ENCODE measurements at regions of chr12 and their contacts with region 1.

Region 1: DNA sequence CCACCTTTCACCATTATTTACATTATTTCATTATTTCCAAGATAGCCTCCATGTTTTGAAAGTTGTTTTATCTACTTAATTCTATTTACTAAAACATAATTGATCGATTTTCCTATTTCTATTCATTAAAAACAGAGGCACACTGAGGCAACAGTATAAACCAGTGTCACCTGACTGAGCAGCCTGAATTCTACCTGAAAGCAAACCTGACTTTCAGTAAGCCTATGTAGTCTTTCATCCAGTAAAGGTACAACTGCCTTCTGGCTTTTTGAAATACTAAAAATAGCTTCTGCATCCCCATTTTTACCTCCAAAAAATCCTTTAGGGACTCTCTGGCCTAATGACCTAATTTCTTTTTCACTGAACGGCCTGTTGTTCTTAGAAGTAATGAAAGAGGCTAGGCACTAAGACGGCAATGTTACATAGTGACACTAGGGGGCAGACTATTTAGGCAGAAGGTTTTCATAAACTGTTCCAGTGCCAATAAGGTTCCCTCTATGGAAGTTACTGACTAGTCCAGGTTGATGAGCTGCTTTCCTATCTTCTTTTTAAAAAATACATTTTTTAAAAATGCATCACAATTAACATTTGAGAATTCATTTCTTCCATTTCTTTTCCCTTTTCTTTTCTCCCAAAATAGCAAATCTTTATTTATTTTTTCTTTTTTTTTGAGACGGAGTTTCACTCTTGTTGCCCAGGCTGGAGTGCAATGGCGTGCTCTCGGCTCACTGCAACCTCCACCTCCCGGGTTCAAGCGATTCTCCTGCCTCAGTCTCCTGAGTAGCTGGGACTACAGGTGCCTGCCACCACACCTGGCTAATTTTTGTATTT is 17.5 kb downstream of the ANAPC5 start:
- DNase-seq: peak in 3 of 9 experiments; percentile 14 to 74 (median 60)
- ATAC-seq: peak; percentile 93
- H3K4me3 ChIP-seq: no peak overlapping the region
- H3K4me3 Mint-ChIP-seq: no peak overlapping the region
- H3K27ac ChIP-seq: no peak overlapping the region
- H3K27ac Mint-ChIP-seq: no peak overlapping the region
- H3K4me1 ChIP-seq: no peaks in the 10 kb centered on the region
- H3K4me1 Mint-ChIP-seq: peaks cover 3% of the 10 kb centered on the region
- H3K27me3 ChIP-seq: no peaks in the 10 kb centered on the region
- H3K27me3 Mint-ChIP-seq: no peaks in the 10 kb centered on the region
- CTCF ChIP-seq: peak; percentile 92

Region 2: DNA sequence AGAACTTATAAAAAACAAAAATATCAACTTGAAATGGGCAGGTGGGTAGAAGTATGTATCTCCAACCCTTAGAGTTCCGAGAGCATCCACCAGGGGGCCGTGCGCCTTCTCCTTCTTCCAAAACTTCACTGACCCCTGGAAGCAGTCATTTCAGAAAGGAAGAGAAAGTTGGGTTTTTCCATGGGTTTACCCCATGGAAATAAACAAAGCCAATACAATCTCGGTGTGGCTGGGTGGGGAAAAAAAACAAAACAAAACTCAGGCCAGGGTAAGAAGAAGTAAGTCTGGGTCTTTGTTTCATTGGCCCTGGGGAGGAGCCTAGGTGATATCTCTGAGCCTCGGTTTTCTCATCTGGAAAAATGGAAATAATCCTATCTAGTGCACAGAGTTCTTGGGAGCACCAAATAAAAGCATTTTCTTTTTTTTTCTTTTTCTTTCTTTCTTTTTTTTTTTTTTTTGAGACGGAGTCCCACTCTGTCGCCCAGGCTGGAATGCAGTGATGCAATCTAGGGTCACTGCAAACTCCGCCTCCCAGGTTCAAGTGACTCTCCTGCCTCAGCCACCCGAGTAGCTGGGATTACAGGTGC is 390.0 kb before region 1 on chr12:
- CTCF ChIA-PET with region 1: no interaction called
- POLR2A ChIA-PET with region 1: no interaction called
- intact Hi-C with region 1: no loop called
- DNase-seq: peak; percentile 21 to 75 (median 65)
- ATAC-seq: peak; percentile 69
- H3K4me3 ChIP-seq: no peak overlapping the region
- H3K4me3 Mint-ChIP-seq: no peak overlapping the region
- H3K27ac ChIP-seq: no peak overlapping the region
- H3K27ac Mint-ChIP-seq: no peak overlapping the region
- H3K4me1 ChIP-seq: no peaks in the 10 kb centered on the region
- H3K4me1 Mint-ChIP-seq: peaks cover 4% of the 10 kb centered on the region
- H3K27me3 ChIP-seq: no peaks in the 10 kb centered on the region
- H3K27me3 Mint-ChIP-seq: no peaks in the 10 kb centered on the region
- CTCF ChIP-seq: peak; percentile 80

Region 3: GRCh38 chr12:121345151-121345815 is 10.6 kb after region 1 on chr12:
- CTCF ChIA-PET with region 1: interaction called, 17 read pairs
- POLR2A ChIA-PET with region 1: interaction called, 3 read pairs
- intact Hi-C with region 1: no loop called
- DNase-seq: no peak
- ATAC-seq: no peak
- H3K4me3 ChIP-seq: no peak overlapping the region
- H3K4me3 Mint-ChIP-seq: no peak overlapping the region
- H3K27ac ChIP-seq: no peak overlapping the region
- H3K27ac Mint-ChIP-seq: peak overlapping the region; percentile 27
- H3K4me1 ChIP-seq: peaks cover 3% of the 10 kb centered on the region
- H3K4me1 Mint-ChIP-seq: peaks cover 32% of the 10 kb centered on the region
- H3K27me3 ChIP-seq: no peaks in the 10 kb centered on the region
- H3K27me3 Mint-ChIP-seq: no peaks in the 10 kb centered on the region
- CTCF ChIP-seq: no peak

Region 4: GRCh38 chr12:121399391-121400331 is 64.9 kb after region 1 on chr12 and contains the start of gene RNF34:
- CTCF ChIA-PET with region 1: interaction called, 4 read pairs
- POLR2A ChIA-PET with region 1: no interaction called
- intact Hi-C with region 1: loop called in 1 of 2 experiments (anchors 1 kb)
- DNase-seq: peak; percentile 95 to 99 (median 97)
- ATAC-seq: peak; percentile 87
- H3K4me3 ChIP-seq: peak within 1 kb of the TSS; percentile 78 to 89
- H3K4me3 Mint-ChIP-seq: peak within 1 kb of the TSS; percentile 86
- H3K27ac ChIP-seq: peak within 1 kb of the TSS; percentile 78 to 90
- H3K27ac Mint-ChIP-seq: peak within 1 kb of the TSS; percentile 97
- H3K4me1 ChIP-seq: peaks cover 28% of the 10 kb centered on the region
- H3K4me1 Mint-ChIP-seq: peaks cover 33% of the 10 kb centered on the region
- H3K27me3 ChIP-seq: no peaks in the 10 kb centered on the region
- H3K27me3 Mint-ChIP-seq: no peaks in the 10 kb centered on the region
- CTCF ChIP-seq: no peak
- total RNA-seq, gene RNF34: 46.8 to 51.3 TPM

Region 5: GRCh38 chr12:121443193-121443870 is 108.6 kb after region 1 on chr12:
- CTCF ChIA-PET with region 1: interaction called, 59 read pairs
- POLR2A ChIA-PET with region 1: interaction called, 3 read pairs
- intact Hi-C with region 1: loop called in 1 of 2 experiments (anchors 1 kb)
- DNase-seq: peak; percentile 43 to 74 (median 67)
- ATAC-seq: peak; percentile 80
- H3K4me3 ChIP-seq: no peak overlapping the region
- H3K4me3 Mint-ChIP-seq: no peak overlapping the region
- H3K27ac ChIP-seq: no peak overlapping the region
- H3K27ac Mint-ChIP-seq: peak overlapping the region; percentile 79
- H3K4me1 ChIP-seq: no peaks in the 10 kb centered on the region
- H3K4me1 Mint-ChIP-seq: peaks cover 5% of the 10 kb centered on the region
- H3K27me3 ChIP-seq: no peaks in the 10 kb centered on the region
- H3K27me3 Mint-ChIP-seq: no peaks in the 10 kb centered on the region
- CTCF ChIP-seq: peak; percentile 76

Region 6: DNA sequence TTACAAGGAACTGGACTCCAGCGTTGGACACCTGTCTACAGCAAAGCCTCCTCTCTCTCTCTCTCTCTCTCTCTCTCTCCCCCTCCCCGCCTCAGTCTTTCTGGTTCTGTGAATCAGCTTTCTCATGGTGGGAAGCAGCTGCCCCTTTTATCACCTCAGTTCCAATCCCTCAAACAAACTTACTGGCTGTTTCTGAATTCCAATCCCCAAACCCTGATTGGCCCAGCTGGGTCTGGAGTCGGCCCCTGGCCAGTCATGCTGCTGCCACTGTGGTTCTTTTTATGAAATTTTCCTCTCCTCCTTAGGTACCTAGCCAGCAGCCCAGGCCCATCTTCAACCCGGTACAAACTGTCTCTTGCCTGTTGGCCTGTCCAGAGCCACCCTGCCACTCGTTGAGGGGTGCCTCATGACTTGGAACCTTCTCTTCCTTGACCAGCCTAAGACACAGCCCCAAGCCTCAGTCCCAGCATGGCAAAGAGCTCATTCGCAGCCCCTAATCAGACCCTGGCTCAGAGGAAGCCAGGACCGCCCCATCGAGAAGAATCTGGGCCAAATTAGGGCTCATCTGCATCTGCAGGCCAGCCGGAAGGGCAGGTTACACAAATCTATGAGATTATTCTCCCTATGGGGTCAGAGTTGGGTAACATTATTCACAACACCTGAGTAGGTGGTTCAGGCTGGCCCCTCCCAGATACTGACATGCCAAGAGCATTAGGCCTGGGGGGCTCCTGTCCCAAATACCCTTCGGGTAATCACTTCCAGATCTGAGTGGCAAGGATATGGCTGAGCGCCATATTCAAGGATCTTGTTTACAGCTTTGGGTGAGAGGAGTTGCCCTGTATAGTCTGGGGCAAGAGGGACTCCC is 344.2 kb after region 1 on chr12:
- CTCF ChIA-PET with region 1: interaction called, 3 read pairs
- POLR2A ChIA-PET with region 1: no interaction called
- intact Hi-C with region 1: loop called (anchors 1 to 2 kb)
- DNase-seq: no peak
- ATAC-seq: no peak
- H3K4me3 ChIP-seq: no peak overlapping the region
- H3K4me3 Mint-ChIP-seq: no peak overlapping the region
- H3K27ac ChIP-seq: no peak overlapping the region
- H3K27ac Mint-ChIP-seq: peak overlapping the region; percentile 83
- H3K4me1 ChIP-seq: peaks cover 5% of the 10 kb centered on the region
- H3K4me1 Mint-ChIP-seq: peaks cover 12% of the 10 kb centered on the region
- H3K27me3 ChIP-seq: no peaks in the 10 kb centered on the region
- H3K27me3 Mint-ChIP-seq: no peaks in the 10 kb centered on the region
- CTCF ChIP-seq: no peak